HCT116 (cell line): ENCODE measurements at regions of chr2 and their contacts with region 1.

Region 1: GRCh38 chr2:95165129-95166064 is at the start of gene ZNF2:
- DNase-seq: peak; percentile 96
- ATAC-seq: peak; percentile 97
- H3K4me3 ChIP-seq: peak within 1 kb of the TSS; percentile 96 to 99
- H3K27ac ChIP-seq: peak within 1 kb of the TSS; percentile 65
- H3K4me1 ChIP-seq: peaks cover 9 to 17% of the 10 kb centered on the region in 2 experiments
- H3K27me3 ChIP-seq: no peaks in the 10 kb centered on the region
- CTCF ChIP-seq: no peak
- POLR2A ChIP-seq: peak; percentile 81
- RAD21 ChIP-seq: no peak
- total RNA-seq, gene ZNF2: 3.4 TPM

Region 2: DNA sequence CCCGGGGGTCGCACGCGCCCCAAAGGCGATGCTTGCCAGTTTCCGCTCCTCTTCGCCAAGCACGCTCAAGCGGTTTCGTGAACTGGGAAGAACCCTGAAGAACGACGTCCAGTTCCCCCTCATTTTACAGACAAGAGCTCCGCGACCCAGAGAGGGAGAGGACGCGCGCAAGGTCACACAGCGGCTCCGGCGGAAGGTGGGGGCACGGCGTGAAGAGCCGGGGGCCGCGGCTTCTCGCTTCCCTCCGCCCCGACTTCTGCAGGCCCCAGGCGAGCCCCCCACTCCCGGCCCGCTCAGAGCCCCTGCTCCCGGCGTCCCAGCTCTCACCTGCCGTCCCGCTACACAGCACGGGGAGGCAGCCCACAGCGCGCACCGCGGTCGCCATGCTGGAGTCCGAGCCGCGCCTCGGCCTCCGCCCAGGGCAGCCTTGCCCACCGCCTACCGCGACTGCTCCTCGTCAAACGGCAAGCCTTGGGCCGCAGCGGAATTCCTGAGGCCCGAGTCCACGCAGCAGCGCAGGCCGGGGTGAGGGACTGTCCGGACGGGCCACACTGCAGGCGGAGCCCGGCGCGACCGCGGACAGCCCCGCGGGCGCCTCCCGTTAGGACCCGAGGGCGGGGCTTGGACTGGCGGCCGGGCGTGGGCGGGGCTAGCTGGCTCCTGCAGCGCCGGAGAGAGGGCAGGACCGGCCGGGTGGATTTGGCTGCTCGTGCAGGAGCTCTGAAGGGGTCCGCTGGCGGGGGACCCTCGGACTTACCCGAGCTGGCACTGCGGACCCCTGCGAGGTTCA is 43.8 kb before region 1 on chr2 and contains the start of gene MRPS5:
- CTCF ChIA-PET with region 1: interaction called, 3 read pairs
- POLR2A ChIA-PET with region 1: no interaction called
- RAD21 ChIA-PET with region 1: interaction called in 1 of 2 experiments, 4 read pairs
- intact Hi-C with region 1: loop called (anchors 1 kb)
- DNase-seq: peak; percentile 34
- ATAC-seq: peak; percentile 94
- H3K4me3 ChIP-seq: peak within 1 kb of the TSS; percentile 98 to 100
- H3K27ac ChIP-seq: peak within 1 kb of the TSS; percentile 89
- H3K4me1 ChIP-seq: peaks cover 0 to 25% of the 10 kb centered on the region in 2 experiments; a peak in 3 of 4 replicates
- H3K27me3 ChIP-seq: no peaks in the 10 kb centered on the region
- CTCF ChIP-seq: no peak
- POLR2A ChIP-seq: peak; percentile 59
- RAD21 ChIP-seq: no peak
- total RNA-seq, gene MRPS5: 70.6 TPM

Region 3: GRCh38 chr2:95231723-95232122 is 66.3 kb after region 1 on chr2:
- CTCF ChIA-PET with region 1: no interaction called
- POLR2A ChIA-PET with region 1: no interaction called
- RAD21 ChIA-PET with region 1: no interaction called
- intact Hi-C with region 1: no loop called
- DNase-seq: peak; percentile 66
- ATAC-seq: peak; percentile 55
- H3K4me3 ChIP-seq: no peak overlapping the region
- H3K27ac ChIP-seq: no peak overlapping the region
- H3K4me1 ChIP-seq: no peaks in the 10 kb centered on the region
- H3K27me3 ChIP-seq: no peaks in the 10 kb centered on the region
- CTCF ChIP-seq: peak; percentile 92 to 95 (median 95)
- POLR2A ChIP-seq: no peak
- RAD21 ChIP-seq: peak; percentile 99